ENCODE measurements at regions of chr13 and their contacts with region 1.

Region 1: DNA sequence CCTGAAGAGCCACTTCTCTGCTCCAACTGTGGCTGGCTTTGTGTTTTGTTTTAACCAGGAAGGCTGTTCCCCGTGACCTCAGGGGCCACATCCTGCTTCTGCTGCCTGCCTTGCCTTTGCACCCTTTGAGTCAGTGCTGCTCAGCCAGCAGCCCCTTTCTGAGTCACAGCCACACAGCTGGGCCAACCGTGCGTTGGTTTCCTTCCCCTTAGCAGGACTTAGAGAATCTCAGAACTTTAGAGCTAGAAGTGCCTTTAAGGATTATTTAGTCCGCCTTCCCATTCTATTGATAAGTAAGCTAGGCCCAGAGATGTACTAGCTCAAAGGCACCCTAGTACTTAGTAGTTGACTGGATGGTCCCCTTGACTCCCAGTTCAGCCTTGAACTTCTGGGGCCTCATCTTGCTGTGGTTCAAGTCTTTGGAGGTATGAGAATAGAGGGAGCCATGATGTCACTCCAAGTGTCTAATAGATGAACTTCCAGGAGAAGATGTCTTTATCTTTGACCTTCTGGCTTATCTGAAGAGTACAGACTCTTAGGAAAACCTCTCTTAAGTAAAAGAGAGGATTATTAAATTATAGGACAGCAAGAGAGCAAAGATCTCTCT is 8.0 kb downstream of the RGCC start:
- DNase-seq: peak; percentile 88 to 96 (median 90)
- H3K4me3 ChIP-seq: peak overlapping the region; percentile 11 to 52
- H3K4me3 Mint-ChIP-seq: peak overlapping the region; percentile 88 to 94 (median 92)
- H3K27ac ChIP-seq: peak overlapping the region; percentile 88
- H3K27ac Mint-ChIP-seq: peak overlapping the region; percentile 97 to 100 (median 99)
- H3K4me1 ChIP-seq: peaks cover 93% of the 10 kb centered on the region
- H3K4me1 Mint-ChIP-seq: peaks cover 75 to 98% (median 85%) of the 10 kb centered on the region in 4 donors
- H3K27me3 ChIP-seq: no peaks in the 10 kb centered on the region
- H3K27me3 Mint-ChIP-seq: peaks cover 0 to 3% of the 10 kb centered on the region in 2 donors

Region 2: GRCh38 chr13:41402681-41403511 is 62.4 kb before region 1 on chr13:
- CTCF ChIA-PET with region 1: no interaction called
- POLR2A ChIA-PET with region 1: no interaction called
- intact Hi-C with region 1: no loop called
- DNase-seq: no peak
- H3K4me3 ChIP-seq: no peak overlapping the region
- H3K4me3 Mint-ChIP-seq: no peak overlapping the region
- H3K27ac ChIP-seq: no peak overlapping the region
- H3K27ac Mint-ChIP-seq: no peak overlapping the region
- H3K4me1 ChIP-seq: no peaks in the 10 kb centered on the region
- H3K4me1 Mint-ChIP-seq: peaks cover 0 to 2% (median 0%) of the 10 kb centered on the region in 4 donors
- H3K27me3 ChIP-seq: no peaks in the 10 kb centered on the region
- H3K27me3 Mint-ChIP-seq: no peaks in the 10 kb centered on the region

Region 3: DNA sequence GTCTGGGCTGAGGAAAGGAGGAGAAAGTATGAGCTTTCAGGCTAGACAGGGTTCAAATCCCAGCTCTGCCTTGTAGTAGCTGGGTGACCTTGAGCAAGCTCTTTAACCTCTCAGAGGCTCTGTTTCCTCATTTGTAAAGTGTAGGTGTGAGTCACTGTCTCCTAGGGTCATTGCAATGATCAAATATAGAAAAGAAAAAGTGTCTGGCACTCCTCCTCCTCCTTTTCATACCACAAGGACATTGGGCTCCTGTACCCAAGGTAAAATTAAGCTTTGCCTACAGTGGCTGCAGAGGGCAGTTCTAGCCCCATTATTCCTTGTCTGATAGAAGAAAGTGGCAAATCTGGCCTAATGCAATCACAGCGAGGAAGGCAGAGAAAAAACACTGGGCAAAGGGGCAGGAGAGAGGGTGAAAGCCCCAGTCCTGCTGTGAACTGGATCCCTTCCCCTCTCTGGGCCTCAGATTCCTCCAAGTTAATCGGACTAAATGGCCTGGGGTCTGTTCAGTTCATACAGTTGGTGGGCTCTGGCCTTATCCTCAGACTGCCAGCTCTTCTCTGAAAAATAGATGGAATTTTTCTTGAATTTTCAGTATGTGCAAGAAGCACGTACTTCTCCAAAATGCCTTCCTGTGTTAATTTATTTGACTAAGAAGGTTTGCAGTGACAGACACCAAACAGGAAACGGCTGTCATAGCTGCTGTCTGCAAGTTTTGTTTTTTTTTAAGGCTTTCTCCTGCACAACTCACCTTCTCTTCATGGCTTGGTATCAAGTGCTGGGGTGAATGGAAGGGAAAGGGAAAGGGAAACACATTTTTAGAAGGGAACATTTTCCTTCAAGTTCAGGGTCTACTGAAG is 27.3 kb after region 1 on chr13:
- CTCF ChIA-PET with region 1: interaction called, 69 read pairs
- POLR2A ChIA-PET with region 1: interaction called, 130 read pairs
- intact Hi-C with region 1: loop called (anchors 1 kb)
- DNase-seq: peak; percentile 52 to 58 (median 57)
- H3K4me3 ChIP-seq: peak overlapping the region; percentile 1 to 56
- H3K4me3 Mint-ChIP-seq: peak overlapping the region; percentile 61 to 85 (median 74)
- H3K27ac ChIP-seq: peak overlapping the region; percentile 57
- H3K27ac Mint-ChIP-seq: peak overlapping the region; percentile 97 to 98 (median 97)
- H3K4me1 ChIP-seq: peaks cover 77% of the 10 kb centered on the region
- H3K4me1 Mint-ChIP-seq: peaks cover 39 to 68% (median 51%) of the 10 kb centered on the region in 4 donors
- H3K27me3 ChIP-seq: no peaks in the 10 kb centered on the region
- H3K27me3 Mint-ChIP-seq: no peaks in the 10 kb centered on the region

Region 4: DNA sequence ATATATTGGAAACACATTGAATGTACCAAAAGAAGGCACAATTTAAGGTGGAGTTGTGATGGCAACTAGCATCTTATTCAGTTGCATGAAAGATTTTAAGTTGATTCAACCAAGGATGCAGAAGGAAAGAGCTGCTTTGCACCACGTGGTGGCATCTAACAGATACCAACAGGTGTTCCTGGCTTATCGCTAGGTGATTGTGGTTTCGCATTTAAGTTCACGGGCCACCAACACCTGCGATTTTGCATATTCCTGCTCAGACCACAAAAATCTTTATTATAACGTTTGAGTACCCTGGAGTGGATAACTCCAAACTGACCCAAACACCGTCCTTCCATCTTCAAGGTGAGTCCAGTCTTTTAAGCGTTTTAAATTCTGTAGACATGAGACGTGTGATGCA is 37.3 kb after region 1 on chr13:
- CTCF ChIA-PET with region 1: interaction called, 69 read pairs
- POLR2A ChIA-PET with region 1: interaction called, 52 read pairs
- intact Hi-C with region 1: no loop called
- DNase-seq: peak; percentile 35 to 47 (median 40)
- H3K4me3 ChIP-seq: no peak overlapping the region
- H3K4me3 Mint-ChIP-seq: peak overlapping the region in 6 of 8 donors; percentile 12 to 59 (median 45)
- H3K27ac ChIP-seq: no peak overlapping the region
- H3K27ac Mint-ChIP-seq: peak overlapping the region; percentile 10 to 88 (median 77)
- H3K4me1 ChIP-seq: peaks cover 50% of the 10 kb centered on the region
- H3K4me1 Mint-ChIP-seq: peaks cover 32 to 53% (median 49%) of the 10 kb centered on the region in 4 donors
- H3K27me3 ChIP-seq: no peaks in the 10 kb centered on the region
- H3K27me3 Mint-ChIP-seq: no peaks in the 10 kb centered on the region

Region 5: GRCh38 chr13:41543664-41544300 is 78.4 kb after region 1 on chr13:
- CTCF ChIA-PET with region 1: interaction called, 3 read pairs
- POLR2A ChIA-PET with region 1: interaction called, 19 read pairs
- intact Hi-C with region 1: no loop called
- DNase-seq: no peak
- H3K4me3 ChIP-seq: no peak overlapping the region
- H3K4me3 Mint-ChIP-seq: no peak overlapping the region
- H3K27ac ChIP-seq: no peak overlapping the region
- H3K27ac Mint-ChIP-seq: peak overlapping the region in 1 of 7 donors; percentile 22
- H3K4me1 ChIP-seq: peaks cover 18% of the 10 kb centered on the region
- H3K4me1 Mint-ChIP-seq: peaks cover 15 to 32% (median 18%) of the 10 kb centered on the region in 4 donors
- H3K27me3 ChIP-seq: no peaks in the 10 kb centered on the region
- H3K27me3 Mint-ChIP-seq: no peaks in the 10 kb centered on the region